ENCODE measurements at regions of chr3 and their contacts with region 1.

Region 1: DNA sequence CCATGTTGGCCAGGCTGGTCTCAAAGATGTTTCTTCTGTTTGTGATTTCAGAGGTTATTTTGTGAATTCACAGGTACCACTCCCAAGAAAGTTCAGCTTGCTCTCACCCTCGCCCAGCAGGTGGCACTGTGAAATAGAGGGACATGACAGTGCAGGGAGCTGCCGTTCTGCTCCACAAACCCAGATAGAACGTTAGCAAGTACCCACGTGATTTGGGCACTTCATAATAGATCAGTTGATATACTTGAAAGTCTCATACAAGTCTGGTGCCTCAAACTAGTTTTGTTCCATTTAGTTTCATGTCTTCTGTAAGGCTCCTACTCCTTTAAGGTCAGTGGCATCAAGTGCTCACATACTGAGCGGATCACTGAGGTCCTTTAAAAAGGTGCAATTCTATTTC is 45.5 kb downstream of the FILIP1L start:
- DNase-seq: peak; percentile 54 to 93
- H3K4me3 ChIP-seq: peak overlapping the region in 1 of 2 donors; percentile 25
- H3K27ac ChIP-seq: peak overlapping the region; percentile 87 to 92
- H3K4me1 ChIP-seq: peaks cover 3 to 22% of the 10 kb centered on the region in 2 donors
- H3K27me3 ChIP-seq: no peaks in the 10 kb centered on the region
- CTCF ChIP-seq: peak; percentile 65 to 80 (median 78)

Region 2: GRCh38 chr3:99551520-99551919 is 517.3 kb before region 1 on chr3:
- intact Hi-C with region 1: no loop called
- DNase-seq: no peak
- H3K4me3 ChIP-seq: no peak overlapping the region
- H3K27ac ChIP-seq: no peak overlapping the region
- H3K4me1 ChIP-seq: peaks cover 0 to 6% of the 10 kb centered on the region in 2 donors
- H3K27me3 ChIP-seq: no peaks in the 10 kb centered on the region
- CTCF ChIP-seq: no peak

Region 3: DNA sequence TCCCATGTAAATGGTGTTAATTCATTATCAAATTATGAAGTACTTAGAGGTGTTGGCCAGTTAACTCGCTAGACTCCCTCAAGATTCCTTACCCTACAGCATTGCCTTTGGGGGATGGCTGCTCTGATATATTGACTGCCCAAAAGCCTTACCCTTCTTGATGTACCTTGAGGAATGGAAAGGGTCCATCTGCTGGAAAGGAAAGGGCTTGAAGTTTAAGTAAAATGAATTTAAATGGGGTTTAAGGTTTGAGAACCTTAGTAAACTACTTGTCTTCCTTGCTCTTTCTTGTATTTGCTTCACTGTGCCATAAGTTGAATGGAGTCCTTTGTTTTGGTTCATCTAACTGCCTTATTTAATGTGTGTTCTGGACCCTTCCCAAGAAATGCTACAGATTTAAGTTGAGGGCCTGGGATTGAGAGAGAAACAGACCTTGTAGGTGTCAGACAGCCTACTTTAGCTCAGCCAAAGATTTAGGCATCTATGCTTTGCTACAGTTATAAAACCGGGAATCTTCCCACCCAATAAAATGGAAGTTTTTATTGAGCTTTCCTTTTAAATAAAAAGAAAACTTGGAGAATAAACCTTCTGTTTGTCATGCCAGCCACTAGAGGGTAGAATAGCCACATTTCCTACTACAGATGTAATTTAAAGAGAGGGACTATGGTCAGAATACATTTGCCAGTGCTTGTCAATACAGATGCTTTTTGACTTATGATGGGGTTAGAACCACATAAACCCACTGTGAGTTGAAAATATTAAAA is 225.8 kb before region 1 on chr3:
- intact Hi-C with region 1: loop called (anchors 10 kb)
- DNase-seq: no peak
- H3K4me3 ChIP-seq: no peak overlapping the region
- H3K27ac ChIP-seq: peak overlapping the region; percentile 78 to 82
- H3K4me1 ChIP-seq: peaks cover 0 to 14% of the 10 kb centered on the region in 2 donors
- H3K27me3 ChIP-seq: no peaks in the 10 kb centered on the region
- CTCF ChIP-seq: peak; percentile 66 to 67 (median 67)

Region 4: GRCh38 chr3:100002599-100003350 is 66.1 kb before region 1 on chr3:
- intact Hi-C with region 1: no loop called
- DNase-seq: no peak
- H3K4me3 ChIP-seq: no peak overlapping the region
- H3K27ac ChIP-seq: peak overlapping the region in 1 of 2 donors; percentile 46
- H3K4me1 ChIP-seq: peaks cover 0 to 18% of the 10 kb centered on the region in 2 donors
- H3K27me3 ChIP-seq: no peaks in the 10 kb centered on the region
- CTCF ChIP-seq: no peak

Region 5: GRCh38 chr3:100047455-100048141 is 21.2 kb before region 1 on chr3:
- intact Hi-C with region 1: loop called (anchors 1 kb)
- DNase-seq: no peak
- H3K4me3 ChIP-seq: no peak overlapping the region
- H3K27ac ChIP-seq: peak overlapping the region; percentile 47 to 89
- H3K4me1 ChIP-seq: peaks cover 6 to 28% of the 10 kb centered on the region in 2 donors
- H3K27me3 ChIP-seq: no peaks in the 10 kb centered on the region
- CTCF ChIP-seq: no peak